ENCODE measurements at regions of chr5 and their contacts with region 1.

Region 1: GRCh38 chr5:56056875-56057274 is 62.1 kb upstream of the IL6ST start:
- DNase-seq: no peak
- H3K4me3 ChIP-seq: no peak overlapping the region
- H3K27me3 ChIP-seq: no peaks in the 10 kb centered on the region; the same call in none of the 2 replicates
- CTCF ChIP-seq: no peak

Region 2: GRCh38 chr5:56099346-56099745 is 42.5 kb after region 1 on chr5:
- CTCF ChIA-PET with region 1: no interaction called
- POLR2A ChIA-PET with region 1: no interaction called
- DNase-seq: peak; percentile 69
- H3K4me3 ChIP-seq: no peak overlapping the region
- H3K27me3 ChIP-seq: no peaks in the 10 kb centered on the region
- CTCF ChIP-seq: no peak

Region 3: GRCh38 chr5:56123531-56124243 is 66.8 kb after region 1 on chr5:
- CTCF ChIA-PET with region 1: no interaction called
- POLR2A ChIA-PET with region 1: interaction called, 24 read pairs
- DNase-seq: peak; percentile 97
- H3K4me3 ChIP-seq: no peak overlapping the region
- H3K27me3 ChIP-seq: no peaks in the 10 kb centered on the region
- CTCF ChIP-seq: no peak

Measured in BJ (cell line).